HepG2 (cell line): ENCODE measurements at regions of chr12 and their contacts with region 1.

Region 1: DNA sequence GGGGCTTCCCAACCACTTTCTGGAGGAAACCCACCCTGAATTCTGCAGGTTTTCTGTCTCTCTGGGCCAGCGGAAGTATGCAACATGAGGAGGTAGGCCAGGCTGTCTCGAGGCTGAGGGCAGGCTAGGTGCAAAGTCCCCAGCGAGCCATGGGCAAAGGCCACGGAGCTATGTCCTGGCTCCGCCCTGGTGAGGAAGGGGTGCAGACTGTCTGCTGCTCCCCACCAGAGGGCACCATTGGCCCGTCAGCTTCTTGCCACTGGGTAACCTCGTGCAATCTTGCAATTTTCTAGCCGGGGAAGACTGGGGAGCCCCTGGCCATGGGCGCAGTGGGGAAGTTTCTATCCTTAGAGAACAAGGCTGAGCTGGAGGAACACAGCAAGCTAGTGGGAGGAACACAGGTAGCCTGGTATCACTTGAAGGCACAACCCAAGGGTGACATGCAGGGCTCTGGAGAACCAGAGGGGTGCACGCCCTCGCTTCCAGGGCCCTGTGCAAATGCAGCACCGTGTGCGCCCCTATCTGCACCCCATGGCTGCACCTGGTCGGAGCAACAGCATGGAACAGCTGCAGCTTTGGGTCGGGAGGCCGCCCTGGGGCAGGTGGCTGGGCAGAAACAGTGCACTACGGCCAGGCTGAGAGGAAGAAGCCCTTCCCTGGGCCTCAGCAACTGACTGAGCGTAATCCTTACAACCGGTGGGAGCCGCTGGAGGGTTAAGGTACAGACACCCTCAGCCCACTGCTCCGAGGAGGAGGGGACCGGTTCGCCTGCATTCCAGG is 27.6 kb upstream of the RPLP0 start:
- DNase-seq: peak; percentile 91
- ATAC-seq: peak; percentile 81
- H3K4me3 ChIP-seq: peak overlapping the region; percentile 50 to 70 (median 58)
- H3K27ac ChIP-seq: peak overlapping the region; percentile 100
- H3K4me1 ChIP-seq: peaks cover 92% of the 10 kb centered on the region
- H3K27me3 ChIP-seq: no peaks in the 10 kb centered on the region
- CTCF ChIP-seq: peak; percentile 98
- EP300 ChIP-seq: peak; percentile 40 to 58; a peak in 2 of 4 replicates
- POLR2A ChIP-seq: peak; percentile 38 to 64
- RAD21 ChIP-seq: peak; percentile 96

Region 2: GRCh38 chr12:120116792-120117651 is 111.5 kb before region 1 on chr12:
- CTCF ChIA-PET with region 1: no interaction called
- POLR2A ChIA-PET with region 1: interaction called, 15 read pairs
- in situ Hi-C with region 1: no loop called
- intact Hi-C with region 1: no loop called
- DNase-seq: peak; percentile 86
- ATAC-seq: peak; percentile 76
- H3K4me3 ChIP-seq: peak overlapping the region; percentile 70 to 99 (median 93)
- H3K27ac ChIP-seq: peak overlapping the region; percentile 92
- H3K4me1 ChIP-seq: peaks cover 68% of the 10 kb centered on the region
- H3K27me3 ChIP-seq: no peaks in the 10 kb centered on the region; a peak in 1 of 5 replicates
- CTCF ChIP-seq: no peak
- EP300 ChIP-seq: peak in 1 of 2 experiments; percentile 46; a peak in 1 of 4 replicates
- POLR2A ChIP-seq: peak in 1 of 2 experiments; percentile 93; a peak in 2 of 4 replicates
- RAD21 ChIP-seq: no peak; the same call in 1 of the 2 replicates

Region 3: DNA sequence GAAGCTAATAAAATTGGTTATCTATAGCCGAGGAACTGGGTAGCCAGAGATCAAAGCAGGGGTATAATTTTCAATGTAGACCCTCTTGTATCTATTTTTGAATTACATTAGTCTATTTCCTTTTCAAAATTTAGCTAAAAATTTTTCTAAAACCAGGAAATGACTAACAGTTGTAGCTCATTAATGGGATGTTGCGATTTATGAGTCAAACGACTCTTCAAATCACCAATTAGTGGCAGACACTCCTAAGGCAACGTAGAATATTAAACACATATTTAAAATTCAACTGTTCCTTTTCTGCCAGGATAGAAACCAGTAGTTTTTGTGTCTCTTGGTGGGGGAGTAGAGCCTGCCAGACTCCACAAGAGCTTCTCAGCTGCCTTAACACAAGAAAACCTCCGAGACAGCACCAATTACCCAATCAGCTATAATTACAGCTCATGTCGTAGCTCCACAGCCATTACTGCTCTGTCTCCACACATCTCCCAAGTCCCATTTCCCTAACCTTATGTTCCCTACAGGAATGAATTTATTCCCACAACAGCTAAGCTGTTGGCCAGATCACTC is 60.9 kb before region 1 on chr12:
- CTCF ChIA-PET with region 1: no interaction called
- POLR2A ChIA-PET with region 1: no interaction called
- in situ Hi-C with region 1: no loop called
- intact Hi-C with region 1: no loop called
- DNase-seq: no peak
- ATAC-seq: no peak
- H3K4me3 ChIP-seq: no peak overlapping the region
- H3K27ac ChIP-seq: no peak overlapping the region
- H3K4me1 ChIP-seq: no peaks in the 10 kb centered on the region
- H3K27me3 ChIP-seq: no peaks in the 10 kb centered on the region
- CTCF ChIP-seq: no peak
- EP300 ChIP-seq: no peak
- POLR2A ChIP-seq: no peak
- RAD21 ChIP-seq: no peak

Region 4: GRCh38 chr12:120194534-120195395 is 33.7 kb before region 1 on chr12 and contains the start of gene GCN1:
- CTCF ChIA-PET with region 1: no interaction called
- POLR2A ChIA-PET with region 1: interaction called, 378 read pairs
- in situ Hi-C with region 1: no loop called
- intact Hi-C with region 1: no loop called
- DNase-seq: peak; percentile 78
- ATAC-seq: peak; percentile 84
- H3K4me3 ChIP-seq: peak within 1 kb of the TSS; percentile 80 to 88 (median 82)
- H3K27ac ChIP-seq: peak within 1 kb of the TSS; percentile 94
- H3K4me1 ChIP-seq: peaks cover 70% of the 10 kb centered on the region
- H3K27me3 ChIP-seq: no peaks in the 10 kb centered on the region; a peak in 1 of 5 replicates
- CTCF ChIP-seq: no peak; the same call in 1 of the 2 replicates
- EP300 ChIP-seq: no peak; a peak in 1 of 4 replicates
- POLR2A ChIP-seq: peak; percentile 62 to 92
- RAD21 ChIP-seq: peak; percentile 57
- total RNA-seq, gene GCN1: 66.7 and 83.0 TPM in 2 replicates

Region 5: GRCh38 chr12:120265473-120266179 is 37.1 kb after region 1 on chr12 and contains the start of gene PXN:
- CTCF ChIA-PET with region 1: interaction called, 51 read pairs
- POLR2A ChIA-PET with region 1: interaction called, 265 read pairs
- in situ Hi-C with region 1: loop called (anchors 5 kb)
- intact Hi-C with region 1: loop called (anchors 1 kb)
- DNase-seq: peak; percentile 73
- ATAC-seq: peak; percentile 80
- H3K4me3 ChIP-seq: peak within 1 kb of the TSS; percentile 76 to 97 (median 88)
- H3K27ac ChIP-seq: peak within 1 kb of the TSS; percentile 53
- H3K4me1 ChIP-seq: peaks cover 71% of the 10 kb centered on the region
- H3K27me3 ChIP-seq: no peaks in the 10 kb centered on the region
- CTCF ChIP-seq: peak; percentile 85
- EP300 ChIP-seq: peak in 1 of 2 experiments; percentile 41; a peak in 1 of 4 replicates
- POLR2A ChIP-seq: peak; percentile 41 to 66; a peak in 3 of 4 replicates
- RAD21 ChIP-seq: peak; percentile 91
- total RNA-seq, gene PXN: 13.6 and 14.2 TPM in 2 replicates

Region 6: GRCh38 chr12:120317224-120318105 is 89.0 kb after region 1 on chr12:
- CTCF ChIA-PET with region 1: no interaction called
- POLR2A ChIA-PET with region 1: interaction called, 24 read pairs
- in situ Hi-C with region 1: no loop called
- intact Hi-C with region 1: no loop called
- DNase-seq: peak; percentile 99
- ATAC-seq: peak; percentile 89
- H3K4me3 ChIP-seq: peak overlapping the region; percentile 70 to 82 (median 70)
- H3K27ac ChIP-seq: peak overlapping the region; percentile 90
- H3K4me1 ChIP-seq: peaks cover 34% of the 10 kb centered on the region
- H3K27me3 ChIP-seq: no peaks in the 10 kb centered on the region; a peak in 1 of 5 replicates
- CTCF ChIP-seq: peak; percentile 81
- EP300 ChIP-seq: peak in 1 of 2 experiments; percentile 23; a peak in 1 of 4 replicates
- POLR2A ChIP-seq: peak; percentile 84 to 90
- RAD21 ChIP-seq: 0 out of 2 replicates have a peak, but pooled peaks have one; percentile 30